ENCODE measurements at regions of chr18 and their contacts with region 1.

Region 1: GRCh38 chr18:35231052-35231451 is 9.8 kb upstream of the ZNF397 start:
- DNase-seq: peak; percentile 65 to 77
- ATAC-seq: peak; percentile 99
- H3K4me3 ChIP-seq: peak overlapping the region; percentile 16 to 49 (median 28)
- H3K27ac ChIP-seq: no peak overlapping the region
- H3K4me1 ChIP-seq: no peaks in the 10 kb centered on the region
- H3K27me3 ChIP-seq: no peaks in the 10 kb centered on the region
- CTCF ChIP-seq: peak; percentile 80 to 96 (median 83)
- POLR2A ChIP-seq: no peak

Region 2: DNA sequence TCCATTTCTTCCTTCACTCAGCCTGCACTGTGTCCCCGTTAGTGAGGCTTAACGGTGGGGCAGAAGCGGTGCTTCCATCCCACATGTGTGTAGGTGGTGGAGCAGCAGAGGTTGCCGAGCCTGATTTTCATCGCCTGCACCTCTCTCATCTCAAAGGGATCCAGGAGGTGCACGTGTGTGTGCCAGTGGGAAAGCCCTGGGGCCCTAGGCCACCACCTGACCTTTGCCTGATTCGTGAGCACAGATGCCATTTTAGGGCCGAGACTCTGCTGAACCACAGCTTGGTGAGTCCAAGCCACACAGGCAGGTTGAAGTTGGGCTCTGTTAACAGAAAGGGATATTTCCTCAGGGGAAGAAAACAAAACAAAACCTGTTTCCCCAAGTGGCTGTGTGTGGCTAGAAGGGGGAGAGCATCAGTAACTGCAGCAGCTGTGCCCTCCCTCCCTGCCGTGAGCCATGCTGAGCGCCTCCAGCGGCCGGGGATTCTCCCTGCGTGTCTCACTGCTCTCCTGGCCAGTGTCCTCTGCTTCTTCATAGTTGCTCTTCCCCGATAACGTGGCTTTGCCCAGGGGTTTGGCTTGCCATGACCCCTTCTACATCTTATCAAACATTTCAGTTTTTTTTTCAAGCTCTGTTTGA is 108.3 kb before region 1 on chr18:
- in situ Hi-C with region 1: no loop called
- intact Hi-C with region 1: no loop called
- DNase-seq: peak in 1 of 2 donors; percentile 69
- ATAC-seq: peak; percentile 37 to 62
- H3K4me3 ChIP-seq: no peak overlapping the region
- H3K27ac ChIP-seq: peak overlapping the region; percentile 64 to 85 (median 66)
- H3K4me1 ChIP-seq: peaks cover 70 to 73% of the 10 kb centered on the region in 2 donors
- H3K27me3 ChIP-seq: no peaks in the 10 kb centered on the region
- CTCF ChIP-seq: peak in 4 of 5 experiments; percentile 38 to 47 (median 42)
- POLR2A ChIP-seq: no peak

Region 3: GRCh38 chr18:35355140-35355618 is 124.1 kb after region 1 on chr18:
- in situ Hi-C with region 1: loop called in 3 of 4 experiments (anchors 5 to 10 kb)
- intact Hi-C with region 1: loop called (anchors 1 kb)
- DNase-seq: peak; percentile 46 to 72
- ATAC-seq: peak; percentile 98 to 100
- H3K4me3 ChIP-seq: peak overlapping the region in 2 of 4 donors; percentile 23 to 42
- H3K27ac ChIP-seq: peak overlapping the region in 2 of 4 donors; percentile 26 to 44
- H3K4me1 ChIP-seq: peaks cover 4 to 9% of the 10 kb centered on the region in 2 donors
- H3K27me3 ChIP-seq: no peaks in the 10 kb centered on the region
- CTCF ChIP-seq: peak; percentile 47 to 80 (median 60)
- POLR2A ChIP-seq: no peak

Region 4: DNA sequence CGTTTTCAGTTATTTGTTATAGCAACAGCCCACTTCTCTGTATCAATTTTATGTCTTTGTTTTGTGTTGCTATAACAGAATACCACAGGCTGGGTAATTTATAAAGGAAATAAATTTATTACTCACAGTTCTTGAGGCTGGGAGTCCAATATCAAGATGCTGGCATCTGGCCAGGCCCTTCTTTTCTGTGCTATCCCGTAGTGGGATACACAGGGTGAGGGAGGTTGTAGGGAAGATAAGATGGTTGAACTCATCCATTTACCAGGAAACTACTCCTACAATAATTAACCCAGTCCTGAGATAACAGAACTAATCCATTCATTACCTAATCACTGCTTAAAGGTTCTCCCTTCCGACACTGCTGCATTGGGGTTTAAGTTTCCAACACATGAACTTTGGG is 1377.1 kb after region 1 on chr18:
- in situ Hi-C with region 1: no loop called
- intact Hi-C with region 1: no loop called
- DNase-seq: no peak
- ATAC-seq: no peak
- H3K4me3 ChIP-seq: no peak overlapping the region
- H3K27ac ChIP-seq: no peak overlapping the region
- H3K4me1 ChIP-seq: no peaks in the 10 kb centered on the region
- H3K27me3 ChIP-seq: no peaks in the 10 kb centered on the region
- CTCF ChIP-seq: no peak
- POLR2A ChIP-seq: no peak